ENCODE measurements at regions of chr14 and their contacts with region 1.

Region 1: DNA sequence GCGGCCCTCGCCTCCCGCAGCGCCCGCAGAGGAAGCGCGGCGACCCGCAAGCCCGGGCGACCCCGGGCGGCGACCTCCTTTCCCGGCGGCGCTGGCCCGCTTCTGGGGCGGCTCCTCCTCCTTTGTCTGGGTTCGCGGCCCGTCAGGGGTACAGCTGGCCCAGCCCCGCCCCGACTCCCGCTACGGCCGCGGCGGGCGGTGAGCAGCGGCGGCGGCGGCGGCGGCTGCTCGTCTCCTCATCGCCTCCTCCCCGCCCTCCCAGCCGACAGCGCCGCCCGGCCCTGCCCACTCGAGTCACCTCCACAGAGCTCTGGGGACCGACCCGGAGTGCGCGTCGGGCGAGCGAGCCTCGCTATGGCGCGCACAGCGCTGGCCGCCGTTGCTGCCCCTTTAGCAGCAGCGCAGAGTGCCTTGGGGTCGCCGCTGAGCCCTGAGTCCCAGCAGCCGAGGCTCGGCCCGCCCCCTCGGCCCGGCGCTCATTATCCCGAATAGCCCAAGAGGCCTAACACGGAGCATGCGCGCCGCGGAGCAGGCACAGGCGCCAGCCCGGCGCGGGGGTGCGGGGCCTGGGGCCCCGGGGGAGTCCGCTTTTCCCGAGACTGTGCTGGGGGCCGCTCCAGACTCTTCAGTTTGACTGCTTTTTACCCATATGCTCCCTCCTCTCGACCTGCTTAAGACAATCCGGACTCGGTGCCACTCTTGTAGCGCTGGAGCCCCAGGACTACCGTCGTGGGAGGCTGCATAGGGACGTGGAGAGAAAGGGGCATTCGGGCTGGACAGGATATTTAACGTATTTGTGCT is at the start of gene SOS2:
- DNase-seq: peak; percentile 63 to 91 (median 83)
- ATAC-seq: peak; percentile 78
- H3K4me3 ChIP-seq: peak within 1 kb of the TSS; percentile 77 to 86
- H3K4me3 Mint-ChIP-seq: peak within 1 kb of the TSS; percentile 86
- H3K27ac ChIP-seq: peak within 1 kb of the TSS; percentile 81 to 84
- H3K27ac Mint-ChIP-seq: peak within 1 kb of the TSS; percentile 94
- H3K4me1 ChIP-seq: peaks cover 16% of the 10 kb centered on the region
- H3K4me1 Mint-ChIP-seq: peaks cover 36% of the 10 kb centered on the region
- H3K27me3 ChIP-seq: no peaks in the 10 kb centered on the region
- H3K27me3 Mint-ChIP-seq: no peaks in the 10 kb centered on the region
- CTCF ChIP-seq: no peak
- total RNA-seq, gene SOS2: 46.8 to 50.2 TPM

Region 2: GRCh38 chr14:49620182-49621113 is 611.2 kb before region 1 on chr14 and contains the starts of genes MGAT2 and RPL36AL:
- CTCF ChIA-PET with region 1: interaction called, 4 read pairs
- POLR2A ChIA-PET with region 1: no interaction called
- intact Hi-C with region 1: loop called in 1 of 2 experiments (anchors 5 kb)
- DNase-seq: peak; percentile 85 to 97 (median 93)
- ATAC-seq: peak; percentile 79
- H3K4me3 ChIP-seq: peak within 1 kb of the TSS; percentile 94 to 95
- H3K4me3 Mint-ChIP-seq: peak within 1 kb of the TSS; percentile 97
- H3K27ac ChIP-seq: peak within 1 kb of the TSS; percentile 98 to 99
- H3K27ac Mint-ChIP-seq: peak within 1 kb of the TSS; percentile 100
- H3K4me1 ChIP-seq: peaks cover 40% of the 10 kb centered on the region
- H3K4me1 Mint-ChIP-seq: peaks cover 62% of the 10 kb centered on the region
- H3K27me3 ChIP-seq: no peaks in the 10 kb centered on the region
- H3K27me3 Mint-ChIP-seq: no peaks in the 10 kb centered on the region
- CTCF ChIP-seq: no peak
- total RNA-seq, gene MGAT2: 22.6 to 24.0 TPM
- total RNA-seq, gene RPL36AL: 302 to 318 TPM

Region 3: DNA sequence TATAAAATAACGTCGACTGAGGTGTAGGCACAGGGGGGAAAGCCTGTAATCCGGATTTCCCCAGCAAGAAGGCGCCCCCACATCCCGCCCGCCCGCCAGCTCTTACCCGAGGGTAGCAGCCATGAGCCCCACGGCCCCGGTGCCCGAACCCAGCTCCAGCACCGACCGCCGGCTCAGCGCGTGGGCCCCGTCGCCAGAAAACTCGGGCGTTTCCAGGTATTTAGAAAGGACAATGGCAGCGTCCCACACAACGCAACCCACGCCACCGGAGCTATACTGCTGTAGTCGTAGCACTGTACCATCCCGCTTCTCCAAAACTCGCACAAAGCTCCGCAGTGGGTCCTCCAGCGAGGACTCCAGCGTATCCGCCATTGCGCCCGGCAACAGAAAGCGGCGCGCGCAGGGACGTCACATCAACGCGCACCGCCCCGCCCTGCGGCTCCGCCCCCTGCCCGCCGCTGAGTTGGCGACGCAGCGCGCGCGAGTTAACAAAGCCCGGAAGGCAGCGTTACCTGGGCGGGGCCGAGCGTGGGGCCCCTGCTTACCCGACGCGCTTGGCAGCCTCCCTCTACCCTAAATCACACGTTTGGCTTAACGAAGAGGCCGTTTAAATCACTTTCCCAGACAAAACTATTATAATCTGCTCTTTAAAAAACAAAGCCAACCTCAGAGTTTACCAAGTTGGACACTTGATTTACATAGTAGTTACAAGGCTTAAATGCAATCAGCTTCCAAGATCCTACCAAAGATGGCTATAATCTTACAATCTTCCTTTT is 115.3 kb before region 1 on chr14 and contains the start of gene VCPKMT:
- CTCF ChIA-PET with region 1: no interaction called
- POLR2A ChIA-PET with region 1: no interaction called
- intact Hi-C with region 1: loop called (anchors 1 to 2 kb)
- DNase-seq: peak; percentile 91 to 98 (median 96)
- ATAC-seq: peak; percentile 97
- H3K4me3 ChIP-seq: peak within 1 kb of the TSS; percentile 69 to 92
- H3K4me3 Mint-ChIP-seq: peak within 1 kb of the TSS; percentile 98
- H3K27ac ChIP-seq: peak within 1 kb of the TSS; percentile 85 to 86
- H3K27ac Mint-ChIP-seq: peak within 1 kb of the TSS; percentile 99
- H3K4me1 ChIP-seq: peaks cover 20% of the 10 kb centered on the region
- H3K4me1 Mint-ChIP-seq: peaks cover 28% of the 10 kb centered on the region
- H3K27me3 ChIP-seq: no peaks in the 10 kb centered on the region
- H3K27me3 Mint-ChIP-seq: no peaks in the 10 kb centered on the region
- CTCF ChIP-seq: no peak
- total RNA-seq, gene VCPKMT: 38.2 to 39.6 TPM

Region 4: GRCh38 chr14:50215400-50215799 is 16.3 kb before region 1 on chr14:
- CTCF ChIA-PET with region 1: no interaction called
- POLR2A ChIA-PET with region 1: no interaction called
- intact Hi-C with region 1: no loop called
- DNase-seq: no peak
- ATAC-seq: no peak
- H3K4me3 ChIP-seq: no peak overlapping the region
- H3K4me3 Mint-ChIP-seq: no peak overlapping the region
- H3K27ac ChIP-seq: no peak overlapping the region
- H3K27ac Mint-ChIP-seq: no peak overlapping the region
- H3K4me1 ChIP-seq: no peaks in the 10 kb centered on the region
- H3K4me1 Mint-ChIP-seq: peaks cover 32% of the 10 kb centered on the region
- H3K27me3 ChIP-seq: no peaks in the 10 kb centered on the region
- H3K27me3 Mint-ChIP-seq: no peaks in the 10 kb centered on the region
- CTCF ChIP-seq: no peak

Region 5: GRCh38 chr14:50260511-50260910 is 28.8 kb after region 1 on chr14:
- CTCF ChIA-PET with region 1: no interaction called
- POLR2A ChIA-PET with region 1: no interaction called
- intact Hi-C with region 1: loop called in 1 of 2 experiments (anchors 2 kb)
- DNase-seq: peak in 4 of 9 experiments; percentile 9 to 57 (median 30)
- ATAC-seq: peak; percentile 55
- H3K4me3 ChIP-seq: no peak overlapping the region
- H3K4me3 Mint-ChIP-seq: no peak overlapping the region
- H3K27ac ChIP-seq: no peak overlapping the region
- H3K27ac Mint-ChIP-seq: no peak overlapping the region
- H3K4me1 ChIP-seq: no peaks in the 10 kb centered on the region
- H3K4me1 Mint-ChIP-seq: no peaks in the 10 kb centered on the region
- H3K27me3 ChIP-seq: no peaks in the 10 kb centered on the region
- H3K27me3 Mint-ChIP-seq: no peaks in the 10 kb centered on the region
- CTCF ChIP-seq: peak; percentile 54

Region 6: DNA sequence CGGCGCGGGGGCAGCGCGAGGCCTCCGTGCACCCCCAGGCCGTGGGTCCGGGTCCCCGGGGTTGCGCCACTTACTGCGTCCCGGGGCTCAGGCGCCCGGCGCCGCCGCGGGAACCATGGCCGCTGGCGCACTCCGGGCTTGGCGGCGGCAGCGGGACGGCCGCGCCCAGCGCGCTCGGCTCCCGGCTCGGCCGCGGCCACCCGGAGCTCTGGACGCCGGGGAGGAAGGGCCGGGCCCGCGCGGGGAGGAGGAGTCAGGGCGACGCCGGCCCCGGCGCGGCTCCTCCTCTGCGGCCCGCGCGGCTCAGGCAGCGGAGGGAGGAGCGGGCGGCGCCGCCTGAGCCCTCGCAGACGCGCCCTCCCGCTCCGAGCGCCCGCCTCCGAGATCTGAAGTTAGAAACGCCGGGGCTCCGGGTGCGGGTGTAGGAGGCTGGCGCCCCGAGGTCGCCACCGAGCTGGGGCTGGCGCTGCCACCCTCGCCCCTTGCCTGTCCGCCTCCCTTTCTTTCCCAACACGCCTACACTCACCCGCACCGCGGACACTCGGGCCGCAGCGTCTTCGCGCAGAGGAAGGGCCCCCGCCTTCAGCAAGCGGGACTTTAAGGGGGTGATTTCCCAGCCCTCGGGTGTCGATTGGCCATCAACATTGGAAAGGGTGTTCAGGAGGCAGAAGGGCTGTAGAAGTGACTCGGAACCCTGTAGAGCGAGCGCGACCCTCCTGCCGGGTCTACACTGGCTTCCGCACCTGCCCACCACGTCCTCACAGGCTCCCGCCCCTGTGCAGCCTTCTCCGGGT is 599.5 kb after region 1 on chr14 and contains the start of gene NIN:
- CTCF ChIA-PET with region 1: no interaction called
- POLR2A ChIA-PET with region 1: interaction called, 3 read pairs
- intact Hi-C with region 1: loop called in 1 of 2 experiments (anchors 5 kb)
- DNase-seq: peak; percentile 44 to 89 (median 75)
- ATAC-seq: peak; percentile 80
- H3K4me3 ChIP-seq: peak within 1 kb of the TSS; percentile 79 to 86
- H3K4me3 Mint-ChIP-seq: peak within 1 kb of the TSS; percentile 97
- H3K27ac ChIP-seq: peak within 1 kb of the TSS; percentile 76 to 87
- H3K27ac Mint-ChIP-seq: peak within 1 kb of the TSS; percentile 98
- H3K4me1 ChIP-seq: peaks cover 50% of the 10 kb centered on the region
- H3K4me1 Mint-ChIP-seq: peaks cover 68% of the 10 kb centered on the region
- H3K27me3 ChIP-seq: no peaks in the 10 kb centered on the region
- H3K27me3 Mint-ChIP-seq: no peaks in the 10 kb centered on the region
- CTCF ChIP-seq: no peak
- total RNA-seq, gene NIN: 121 to 132 TPM

Measured in CD8-positive, alpha-beta T cell (primary cell).